ENCODE measurements at regions of chr14 and their contacts with region 1.

Region 1: GRCh38 chr14:67251573-67252226 is 10.5 kb downstream of the PALS1 start:
- DNase-seq: no peak
- H3K4me3 ChIP-seq: no peak overlapping the region
- H3K27ac ChIP-seq: no peak overlapping the region
- H3K4me1 ChIP-seq: no peaks in the 10 kb centered on the region; a peak in 1 of 7 replicates
- H3K27me3 ChIP-seq: no peaks in the 10 kb centered on the region
- CTCF ChIP-seq: no peak
- EP300 ChIP-seq: no peak
- POLR2A ChIP-seq: no peak
- RAD21 ChIP-seq: no peak

Region 2: GRCh38 chr14:67199016-67199415 is 52.7 kb before region 1 on chr14:
- CTCF ChIA-PET with region 1: no interaction called
- POLR2A ChIA-PET with region 1: no interaction called
- DNase-seq: no peak
- H3K4me3 ChIP-seq: no peak overlapping the region
- H3K27ac ChIP-seq: no peak overlapping the region
- H3K4me1 ChIP-seq: no peaks in the 10 kb centered on the region
- H3K27me3 ChIP-seq: no peaks in the 10 kb centered on the region
- CTCF ChIP-seq: no peak
- EP300 ChIP-seq: no peak
- POLR2A ChIP-seq: no peak
- RAD21 ChIP-seq: no peak

Region 3: DNA sequence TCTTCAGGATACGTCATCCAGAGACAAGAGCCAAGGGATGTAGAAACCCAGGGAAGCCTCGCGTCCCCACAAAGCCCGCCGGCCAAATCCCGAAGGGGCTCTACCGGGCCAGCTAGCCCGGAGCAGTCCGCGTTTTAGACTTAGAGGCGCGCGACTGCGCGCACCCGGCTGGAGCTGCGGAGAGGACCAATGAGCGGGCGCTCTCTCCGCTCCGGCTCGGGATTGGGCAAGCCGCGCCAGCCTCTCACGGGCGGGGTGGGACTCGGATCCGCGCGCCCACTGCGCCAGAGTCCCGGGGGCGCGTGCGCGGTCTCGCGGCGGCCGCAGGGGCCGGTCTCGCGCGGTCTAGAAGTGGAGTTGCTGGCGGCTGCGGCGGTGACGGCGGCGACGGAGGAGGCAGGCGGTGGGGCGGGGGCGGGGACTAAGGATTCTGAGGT is 10.7 kb before region 1 on chr14:
- CTCF ChIA-PET with region 1: interaction called, 3 read pairs
- POLR2A ChIA-PET with region 1: interaction called, 13 read pairs
- DNase-seq: peak; percentile 87 to 93
- H3K4me3 ChIP-seq: peak overlapping the region; percentile 62 to 95 (median 85)
- H3K27ac ChIP-seq: peak overlapping the region; percentile 87; the same call in 1 of the 2 replicates
- H3K4me1 ChIP-seq: peaks cover 0 to 4% (median 2%) of the 10 kb centered on the region in 4 experiments; a peak in 3 of 7 replicates
- H3K27me3 ChIP-seq: peaks cover 0 to 8% (median 7%) of the 10 kb centered on the region in 4 experiments; a peak in 5 of 7 replicates
- CTCF ChIP-seq: no peak
- EP300 ChIP-seq: no peak
- POLR2A ChIP-seq: peak in 1 of 2 experiments; percentile 48; a peak in 2 of 3 replicates
- RAD21 ChIP-seq: no peak

Measured in H1 (cell line).